ENCODE measurements at regions of chr10 and their contacts with region 1.

Region 1: GRCh38 chr10:74991440-74992130 is 119.9 kb upstream of the SAMD8 start:
- DNase-seq: peak; percentile 34
- H3K4me3 Mint-ChIP-seq: no peak overlapping the region
- H3K27ac Mint-ChIP-seq: no peak overlapping the region
- H3K4me1 Mint-ChIP-seq: no peaks in the 10 kb centered on the region
- H3K27me3 Mint-ChIP-seq: no peaks in the 10 kb centered on the region
- CTCF ChIP-seq: peak; percentile 67

Region 2: DNA sequence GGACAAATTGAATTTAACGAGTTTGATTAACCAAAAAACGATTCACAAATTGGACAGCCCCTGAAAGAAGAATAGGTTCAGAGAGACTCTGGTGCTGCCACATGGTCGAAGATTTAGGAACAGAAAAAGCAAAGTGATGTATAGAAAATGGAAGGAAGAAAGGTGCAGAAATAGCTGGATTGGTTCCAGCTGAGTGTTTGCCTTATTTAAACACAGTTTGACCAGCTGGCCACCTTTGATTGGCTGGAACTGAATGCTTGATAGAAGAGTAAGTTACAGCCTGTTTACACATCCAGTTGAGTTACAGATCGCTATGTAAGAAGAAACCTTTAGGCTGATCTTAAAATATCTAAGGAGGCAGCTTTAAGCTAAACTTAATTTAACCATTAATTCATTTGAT is 205.5 kb before region 1 on chr10:
- CTCF ChIA-PET with region 1: no interaction called
- intact Hi-C with region 1: no loop called
- DNase-seq: no peak
- H3K4me3 Mint-ChIP-seq: no peak overlapping the region
- H3K27ac Mint-ChIP-seq: no peak overlapping the region
- H3K4me1 Mint-ChIP-seq: no peaks in the 10 kb centered on the region
- H3K27me3 Mint-ChIP-seq: no peaks in the 10 kb centered on the region
- CTCF ChIP-seq: no peak

Region 3: DNA sequence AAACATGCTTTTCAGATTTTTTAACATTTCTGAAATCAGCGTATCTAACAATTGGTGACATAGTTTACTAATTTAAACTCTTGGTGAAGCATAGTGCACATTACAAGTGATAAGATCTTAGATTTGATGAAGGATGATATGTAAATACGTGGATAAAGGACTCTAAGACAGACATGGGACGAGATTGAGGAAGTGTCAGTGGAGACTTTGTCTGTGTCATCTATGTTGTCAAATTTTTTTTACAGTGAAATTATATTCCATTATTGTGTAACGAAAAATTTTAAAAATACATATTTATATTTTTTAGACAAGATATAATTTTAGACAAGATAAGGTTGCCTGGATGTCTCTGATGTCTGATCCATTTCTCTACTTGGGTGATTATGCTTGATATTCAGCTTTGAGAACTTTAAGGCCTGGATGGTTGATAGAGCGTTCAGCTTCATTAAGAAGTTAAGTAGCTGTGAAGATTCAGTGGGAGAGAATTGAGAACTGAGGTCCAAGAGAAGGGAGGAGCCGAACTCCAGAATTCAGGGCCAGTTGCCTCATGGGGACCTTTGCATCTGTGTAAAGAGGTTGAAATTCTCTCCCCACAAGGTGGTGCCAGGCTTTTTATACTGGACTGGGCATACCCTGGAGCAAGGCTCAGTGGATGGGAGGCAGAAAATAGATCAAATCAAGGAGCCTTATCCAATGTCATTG is 102.5 kb before region 1 on chr10:
- CTCF ChIA-PET with region 1: no interaction called
- intact Hi-C with region 1: loop called (anchors 10 kb)
- DNase-seq: peak; percentile 26
- H3K4me3 Mint-ChIP-seq: no peak overlapping the region
- H3K27ac Mint-ChIP-seq: no peak overlapping the region
- H3K4me1 Mint-ChIP-seq: peaks cover 8% of the 10 kb centered on the region
- H3K27me3 Mint-ChIP-seq: no peaks in the 10 kb centered on the region
- CTCF ChIP-seq: peak; percentile 13